Activated CD4-positive, alpha-beta memory T cell treated with anti-CD3 and anti-CD28 coated beads for 36 hours (primary cell): ENCODE measurements at regions of chr12 and their contacts with region 1.

Region 1: GRCh38 chr12:4215229-4216186 is 58.1 kb upstream of the CCND2 start:
- DNase-seq: peak; percentile 70
- H3K4me3 Mint-ChIP-seq: peak overlapping the region; percentile 59
- H3K27ac Mint-ChIP-seq: peak overlapping the region; percentile 86
- H3K4me1 Mint-ChIP-seq: peaks cover 36% of the 10 kb centered on the region
- H3K27me3 Mint-ChIP-seq: no peaks in the 10 kb centered on the region

Region 2: DNA sequence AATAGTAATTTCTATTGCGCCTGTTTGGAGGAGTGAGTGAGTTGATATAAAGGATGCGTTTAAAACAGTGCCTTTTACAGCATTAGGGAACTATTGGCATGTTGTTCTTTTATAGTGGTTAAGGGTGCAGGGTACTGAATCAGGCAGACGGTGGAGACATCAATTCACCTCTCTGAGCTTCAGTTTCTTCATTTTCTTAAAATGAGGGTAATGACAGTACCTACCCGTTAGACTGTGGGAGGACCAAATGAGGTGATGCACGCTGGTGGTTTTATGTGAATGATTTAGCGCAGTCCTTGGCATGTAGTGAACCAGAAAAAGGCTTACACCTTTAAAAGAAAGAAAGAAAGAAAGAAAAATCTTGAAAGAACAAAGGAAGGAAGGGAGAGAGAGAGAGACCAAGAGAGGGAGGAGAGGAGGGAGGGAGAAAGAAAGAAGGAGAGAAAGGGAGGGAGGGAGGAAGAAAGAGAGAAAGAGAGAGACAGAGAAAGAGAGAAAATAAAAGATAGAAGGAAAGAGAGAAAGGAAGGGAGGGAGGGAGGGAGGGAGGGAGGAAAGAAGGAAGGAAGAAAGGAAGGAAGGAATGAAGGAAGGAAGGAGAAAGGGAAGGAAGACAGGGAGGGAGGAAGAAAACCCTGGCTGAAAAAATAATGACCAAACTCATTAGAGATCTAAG is 35.8 kb after region 1 on chr12:
- CTCF ChIA-PET with region 1: interaction called, 4 read pairs
- POLR2A ChIA-PET with region 1: interaction called, 6 read pairs
- intact Hi-C with region 1: loop called (anchors 5 kb)
- DNase-seq: peak; percentile 61
- H3K4me3 Mint-ChIP-seq: no peak overlapping the region
- H3K27ac Mint-ChIP-seq: no peak overlapping the region
- H3K4me1 Mint-ChIP-seq: peaks cover 15% of the 10 kb centered on the region
- H3K27me3 Mint-ChIP-seq: peaks cover 2% of the 10 kb centered on the region